ENCODE measurements at regions of chr1 and their contacts with region 1.

Region 1: GRCh38 chr1:42013881-42014470 is 95.3 kb upstream of the HIVEP3 start:
- DNase-seq: peak; percentile 17
- H3K4me3 Mint-ChIP-seq: peak overlapping the region; percentile 44
- H3K27ac Mint-ChIP-seq: no peak overlapping the region
- H3K4me1 Mint-ChIP-seq: peaks cover 50% of the 10 kb centered on the region
- H3K27me3 Mint-ChIP-seq: no peaks in the 10 kb centered on the region

Region 2: DNA sequence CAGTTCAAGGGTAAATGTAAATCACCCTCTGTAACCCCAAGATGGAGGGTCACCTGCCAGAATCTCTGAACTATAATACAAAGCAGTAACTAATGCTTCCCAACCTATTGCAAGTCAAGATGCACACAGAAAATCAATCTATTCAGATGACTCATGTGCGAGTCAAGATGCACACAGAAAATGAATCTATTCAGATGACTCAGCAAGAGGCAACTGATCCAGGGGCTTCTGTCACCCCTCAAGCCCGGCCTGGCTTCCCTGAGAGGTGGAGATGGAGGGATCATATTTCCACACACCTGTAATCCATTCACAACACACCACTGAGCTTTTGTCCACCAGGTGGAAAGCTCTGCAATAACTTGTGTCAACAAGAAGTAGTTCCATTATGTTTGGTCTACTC is 77.9 kb before region 1 on chr1:
- CTCF ChIA-PET with region 1: no interaction called
- intact Hi-C with region 1: loop called (anchors 5 kb)
- DNase-seq: peak; percentile 55
- H3K4me3 Mint-ChIP-seq: no peak overlapping the region
- H3K27ac Mint-ChIP-seq: no peak overlapping the region
- H3K4me1 Mint-ChIP-seq: peaks cover 40% of the 10 kb centered on the region
- H3K27me3 Mint-ChIP-seq: no peaks in the 10 kb centered on the region

Region 3: DNA sequence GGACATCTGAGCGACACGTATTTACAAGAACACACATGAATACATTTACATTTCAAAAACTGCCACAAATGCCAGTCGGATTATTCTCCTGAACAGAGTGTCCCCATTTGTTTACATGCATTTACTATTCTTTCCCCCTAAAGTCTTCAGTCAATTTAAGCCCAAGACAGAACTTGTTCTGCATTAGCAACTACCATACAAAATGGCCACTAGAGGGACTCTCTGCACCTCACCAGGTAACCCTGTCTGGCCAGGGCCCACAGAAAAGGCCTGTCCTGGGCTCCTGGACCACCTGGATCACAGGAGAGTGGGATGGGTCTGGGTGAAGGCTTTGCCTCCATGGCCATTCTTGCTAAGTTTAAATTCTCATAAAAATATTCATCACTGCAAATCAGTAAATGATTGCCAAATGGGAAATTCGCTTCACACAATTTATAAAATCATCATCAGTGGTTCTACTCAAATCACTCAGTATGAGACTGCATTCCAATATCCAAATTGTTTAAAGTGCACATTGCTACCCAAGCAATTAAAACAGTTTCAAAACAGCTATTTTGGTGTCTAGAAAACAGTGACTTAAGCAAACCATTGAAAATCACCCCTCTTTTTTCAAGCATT is 163.0 kb after region 1 on chr1:
- CTCF ChIA-PET with region 1: no interaction called
- intact Hi-C with region 1: no loop called
- DNase-seq: peak; percentile 37
- H3K4me3 Mint-ChIP-seq: no peak overlapping the region
- H3K27ac Mint-ChIP-seq: no peak overlapping the region
- H3K4me1 Mint-ChIP-seq: no peaks in the 10 kb centered on the region
- H3K27me3 Mint-ChIP-seq: no peaks in the 10 kb centered on the region

Measured in activated naive CD4-positive, alpha-beta T cell treated with anti-CD3 and anti-CD28 coated beads for 36 hours (primary cell).